Activated naive CD4-positive, alpha-beta T cell treated with anti-CD3 and anti-CD28 coated beads, Interleukin-2, amount 10 ng/mL, durations not matched to agents 7 days and 5 days (primary cell): ENCODE measurements at regions of chr6 and their contacts with region 1.

Region 1: GRCh38 chr6:85537055-85537494 is 56.6 kb downstream of the SNX14 start:
- DNase-seq: no peak
- H3K4me3 Mint-ChIP-seq: no peak overlapping the region
- H3K27ac Mint-ChIP-seq: no peak overlapping the region
- H3K4me1 Mint-ChIP-seq: no peaks in the 10 kb centered on the region
- H3K27me3 Mint-ChIP-seq: no peaks in the 10 kb centered on the region

Region 2: GRCh38 chr6:85354761-85355618 is 182.1 kb before region 1 on chr6:
- CTCF ChIA-PET with region 1: interaction called, 23 read pairs
- DNase-seq: peak; percentile 69
- H3K4me3 Mint-ChIP-seq: no peak overlapping the region
- H3K27ac Mint-ChIP-seq: no peak overlapping the region
- H3K4me1 Mint-ChIP-seq: no peaks in the 10 kb centered on the region
- H3K27me3 Mint-ChIP-seq: peaks cover 8% of the 10 kb centered on the region

Region 3: DNA sequence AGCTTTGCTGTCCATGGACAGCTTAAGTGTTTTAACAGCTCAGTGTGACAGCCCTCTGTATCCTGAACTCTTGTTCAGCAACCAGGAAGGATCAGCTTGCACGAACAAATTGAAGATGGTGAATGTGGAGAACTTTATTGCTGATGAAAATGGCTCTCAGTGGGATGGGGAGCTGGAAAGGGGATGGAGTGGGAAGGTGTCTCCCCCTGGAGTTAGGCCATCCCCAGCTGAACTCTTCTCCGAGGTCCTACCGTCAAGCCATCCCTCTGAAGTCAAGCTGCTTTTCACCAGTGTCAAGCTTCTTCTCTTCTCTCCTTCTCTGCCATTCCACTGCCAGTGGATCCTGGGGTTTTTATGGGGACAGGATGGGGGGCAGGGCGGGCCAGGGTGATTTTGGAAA is 60.5 kb before region 1 on chr6:
- CTCF ChIA-PET with region 1: interaction called, 10 read pairs
- DNase-seq: no peak
- H3K4me3 Mint-ChIP-seq: no peak overlapping the region
- H3K27ac Mint-ChIP-seq: no peak overlapping the region
- H3K4me1 Mint-ChIP-seq: no peaks in the 10 kb centered on the region
- H3K27me3 Mint-ChIP-seq: peaks cover 21% of the 10 kb centered on the region

Region 4: DNA sequence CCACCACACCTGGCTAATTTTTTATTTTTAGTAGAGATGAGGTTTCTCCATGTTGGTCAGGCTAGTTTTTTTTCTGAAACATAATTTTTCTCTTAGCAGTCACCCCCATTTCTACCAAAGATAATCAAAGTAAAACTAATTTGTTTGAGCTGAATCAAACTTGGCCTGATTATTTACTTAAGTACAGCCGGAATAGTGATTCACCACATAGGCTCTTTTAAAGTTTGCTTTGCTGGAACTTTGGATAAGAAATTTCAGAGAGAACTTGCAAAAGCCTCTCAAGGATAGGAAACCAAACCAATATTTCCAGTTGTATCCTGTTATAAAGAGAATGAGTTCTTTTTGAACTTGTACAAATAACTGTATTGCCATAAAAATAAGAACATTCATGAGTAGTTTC is 210.6 kb after region 1 on chr6:
- CTCF ChIA-PET with region 1: no interaction called
- DNase-seq: no peak
- H3K4me3 Mint-ChIP-seq: no peak overlapping the region
- H3K27ac Mint-ChIP-seq: no peak overlapping the region
- H3K4me1 Mint-ChIP-seq: no peaks in the 10 kb centered on the region
- H3K27me3 Mint-ChIP-seq: peaks cover 16% of the 10 kb centered on the region